BJ (cell line): ENCODE measurements at regions of chr7 and their contacts with region 1.

Region 1: GRCh38 chr7:992709-993607 is 10.0 kb downstream of the CYP2W1 start:
- DNase-seq: peak; percentile 45
- H3K4me3 ChIP-seq: no peak overlapping the region
- H3K27me3 ChIP-seq: no peaks in the 10 kb centered on the region
- CTCF ChIP-seq: peak; percentile 100

Region 2: DNA sequence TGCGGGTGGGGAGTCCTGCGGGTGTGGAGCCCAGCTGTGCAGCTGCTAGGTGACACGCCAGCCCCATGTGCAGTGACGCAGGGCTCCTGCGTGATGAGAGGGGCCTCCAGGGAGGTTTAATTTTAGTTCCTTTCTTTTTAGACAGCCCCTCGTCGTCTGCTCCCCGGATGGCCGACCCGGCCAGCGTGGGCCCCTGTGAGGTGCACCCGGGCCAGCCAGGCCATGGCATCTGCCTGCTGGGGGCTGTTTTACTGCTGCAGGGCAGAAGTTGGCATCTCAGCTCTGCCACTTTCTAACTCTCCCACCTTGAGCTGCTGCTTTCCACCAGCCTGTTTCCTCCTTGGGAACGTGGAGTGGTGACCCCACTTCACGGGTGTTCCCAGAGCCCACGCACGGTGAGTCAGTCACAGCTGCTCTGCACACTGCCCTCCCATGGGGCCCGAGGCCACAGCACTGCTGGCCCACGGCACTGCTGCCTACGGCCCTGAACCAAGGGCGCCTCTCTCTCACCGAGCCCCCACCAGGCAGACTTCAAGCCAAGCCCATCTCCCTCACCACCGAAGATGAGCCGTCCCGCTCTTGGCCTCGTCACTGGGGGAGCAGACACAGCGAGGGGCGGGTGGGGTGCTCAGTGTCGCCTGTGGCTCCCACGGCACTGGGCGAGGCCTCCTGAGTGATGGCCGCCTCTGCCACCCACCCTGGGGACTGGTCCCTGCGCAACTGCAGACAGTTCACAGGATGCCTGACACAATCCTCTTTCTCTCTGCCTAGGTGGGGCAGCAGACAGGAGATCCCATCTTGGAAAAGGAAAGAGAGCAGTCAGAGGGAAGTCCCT is 11.3 kb after region 1 on chr7:
- CTCF ChIA-PET with region 1: interaction called, 32 read pairs
- POLR2A ChIA-PET with region 1: no interaction called
- DNase-seq: no peak
- H3K4me3 ChIP-seq: no peak overlapping the region
- H3K27me3 ChIP-seq: no peaks in the 10 kb centered on the region
- CTCF ChIP-seq: no peak

Region 3: DNA sequence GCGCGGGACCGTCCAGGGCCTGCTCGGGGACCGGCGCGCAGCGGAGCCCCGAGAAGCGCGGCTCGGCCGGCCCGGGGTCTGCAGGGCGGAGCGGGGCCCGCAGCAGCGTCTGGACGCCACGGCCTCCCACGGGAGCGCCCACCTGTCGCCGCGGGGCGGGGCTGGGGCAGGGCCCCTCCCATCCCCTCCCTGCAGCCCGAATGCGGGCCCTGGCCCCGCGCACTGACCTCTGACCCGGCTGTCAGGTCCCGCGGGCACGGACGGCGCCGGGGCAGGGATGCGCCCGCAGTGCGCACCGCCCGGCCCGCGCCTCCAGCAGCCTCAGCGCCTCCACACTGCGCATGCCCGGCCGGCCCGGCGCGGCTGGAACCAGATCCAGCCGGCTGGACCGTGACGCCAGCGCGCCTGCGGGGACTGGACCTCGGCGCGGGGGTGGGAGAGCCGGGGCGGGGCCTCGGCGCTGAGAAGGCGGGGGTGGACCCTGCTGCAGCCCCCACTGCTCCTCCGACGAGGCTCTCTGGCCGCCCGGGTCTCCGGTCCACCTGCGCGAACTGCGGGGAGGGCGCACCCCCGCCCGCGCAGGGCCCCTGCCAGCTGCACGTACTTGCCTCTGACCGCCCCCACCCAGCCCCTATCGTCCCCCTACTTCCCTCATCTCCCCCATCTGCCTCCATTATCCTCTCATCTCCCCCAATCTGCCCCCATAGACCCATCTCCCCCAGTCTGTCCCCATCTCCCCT is 35.2 kb after region 1 on chr7:
- CTCF ChIA-PET with region 1: interaction called, 18 read pairs
- POLR2A ChIA-PET with region 1: no interaction called
- DNase-seq: peak; percentile 27
- H3K4me3 ChIP-seq: peak overlapping the region; percentile 67
- H3K27me3 ChIP-seq: no peaks in the 10 kb centered on the region
- CTCF ChIP-seq: no peak

Region 4: GRCh38 chr7:1065263-1066260 is 72.6 kb after region 1 on chr7:
- CTCF ChIA-PET with region 1: interaction called, 367 read pairs
- POLR2A ChIA-PET with region 1: no interaction called
- DNase-seq: no peak
- H3K4me3 ChIP-seq: no peak overlapping the region
- H3K27me3 ChIP-seq: no peaks in the 10 kb centered on the region
- CTCF ChIP-seq: peak; percentile 94

Region 5: GRCh38 chr7:1131528-1132265 is 138.7 kb after region 1 on chr7:
- CTCF ChIA-PET with region 1: no interaction called
- POLR2A ChIA-PET with region 1: no interaction called
- DNase-seq: no peak
- H3K4me3 ChIP-seq: no peak overlapping the region
- H3K27me3 ChIP-seq: no peaks in the 10 kb centered on the region
- CTCF ChIP-seq: no peak

Region 6: DNA sequence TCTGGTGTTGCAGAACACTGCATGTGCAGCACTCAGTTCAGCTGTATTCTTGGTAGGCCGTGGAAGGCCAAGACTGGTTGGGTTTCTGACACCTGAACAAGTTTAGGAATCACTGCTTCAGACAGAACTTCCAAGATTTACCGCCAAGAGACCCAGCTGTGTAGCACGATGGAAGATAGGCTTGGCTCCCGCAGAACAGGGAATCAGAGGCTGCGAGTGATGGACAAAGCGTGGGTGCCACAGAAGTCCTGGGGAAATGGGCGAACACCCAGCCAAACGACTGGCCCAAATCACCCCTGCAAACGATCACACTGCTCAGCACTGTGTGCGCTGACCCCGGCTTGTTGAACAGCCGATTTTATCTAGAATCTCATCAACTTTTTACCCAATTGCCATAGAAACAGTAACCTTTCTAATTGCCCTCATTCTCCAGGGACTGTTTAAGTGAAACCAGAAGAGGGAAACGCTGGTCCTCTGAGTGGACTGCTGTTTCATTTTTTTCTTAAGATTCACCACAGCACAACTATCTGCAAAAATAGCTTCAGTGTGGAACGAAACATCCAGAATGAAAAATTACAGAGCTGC is 149.2 kb after region 1 on chr7:
- CTCF ChIA-PET with region 1: interaction called, 10 read pairs
- POLR2A ChIA-PET with region 1: no interaction called
- DNase-seq: no peak
- H3K4me3 ChIP-seq: no peak overlapping the region
- H3K27me3 ChIP-seq: no peaks in the 10 kb centered on the region
- CTCF ChIP-seq: no peak

Region 7: DNA sequence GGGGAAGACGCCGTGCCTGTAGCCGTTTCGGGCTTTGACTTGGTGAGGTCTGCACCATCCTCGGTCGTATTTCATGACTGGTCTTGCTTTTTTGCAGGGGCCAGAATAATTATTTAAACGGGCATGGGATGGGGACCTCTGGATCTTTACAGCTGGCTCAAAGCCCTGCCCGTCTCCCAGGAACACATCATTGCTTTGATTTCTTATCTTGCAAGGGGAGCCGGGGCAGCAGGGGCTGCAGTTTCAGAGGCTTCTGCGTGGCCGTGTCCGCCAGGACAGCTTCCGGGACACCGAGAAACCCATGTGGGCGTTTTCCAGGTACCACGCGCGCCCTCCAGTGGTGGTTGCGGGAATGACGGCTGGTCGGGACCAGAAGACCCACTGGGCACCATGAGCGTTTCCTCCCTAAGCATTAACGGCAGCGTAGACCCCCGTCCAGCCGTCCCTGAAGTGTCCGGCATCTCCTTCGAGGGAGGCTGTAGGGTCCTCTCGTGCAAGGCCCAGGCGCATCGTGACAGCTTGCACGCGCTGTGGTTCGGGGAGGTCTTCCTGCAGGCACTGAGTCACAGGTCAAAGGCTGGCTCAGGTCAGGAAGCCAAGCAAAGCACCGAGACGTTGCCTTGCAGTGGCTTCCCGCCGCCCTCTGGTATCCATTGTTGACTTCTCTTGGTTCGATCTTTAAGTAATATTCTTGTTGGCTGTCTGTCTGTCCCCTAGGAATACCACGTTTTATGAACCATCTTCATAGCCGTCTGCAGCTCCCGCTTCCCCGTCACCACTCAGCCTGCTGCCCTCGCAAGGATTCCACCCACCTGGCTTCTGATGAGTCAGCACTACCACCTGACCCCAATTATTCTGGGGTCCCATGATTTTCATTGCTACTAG is 183.3 kb after region 1 on chr7:
- CTCF ChIA-PET with region 1: interaction called, 51 read pairs
- POLR2A ChIA-PET with region 1: no interaction called
- DNase-seq: no peak
- H3K4me3 ChIP-seq: peak overlapping the region; percentile 25
- H3K27me3 ChIP-seq: 0 out of 2 replicates have a peak, but pooled peaks cover 1% of the 10 kb centered on the region
- CTCF ChIP-seq: peak; percentile 95